Psoas muscle (tissue), 8 donors: ENCODE measurements at regions of chr1 and their contacts with region 1.

Region 1: GRCh38 chr1:44213222-44214112 is at the start of gene DMAP1:
- DNase-seq: peak; percentile 79 to 91
- ATAC-seq: peak; percentile 92 to 97 (median 94)
- H3K4me3 ChIP-seq: peak within 1 kb of the TSS; percentile 94
- H3K27ac ChIP-seq: peak within 1 kb of the TSS; percentile 78
- H3K4me1 ChIP-seq: peaks cover 10% of the 10 kb centered on the region
- H3K27me3 ChIP-seq: no peaks in the 10 kb centered on the region
- CTCF ChIP-seq: no peak
- total RNA-seq, gene DMAP1: 18.5 to 28.3 (median 23.7) TPM

Region 2: DNA sequence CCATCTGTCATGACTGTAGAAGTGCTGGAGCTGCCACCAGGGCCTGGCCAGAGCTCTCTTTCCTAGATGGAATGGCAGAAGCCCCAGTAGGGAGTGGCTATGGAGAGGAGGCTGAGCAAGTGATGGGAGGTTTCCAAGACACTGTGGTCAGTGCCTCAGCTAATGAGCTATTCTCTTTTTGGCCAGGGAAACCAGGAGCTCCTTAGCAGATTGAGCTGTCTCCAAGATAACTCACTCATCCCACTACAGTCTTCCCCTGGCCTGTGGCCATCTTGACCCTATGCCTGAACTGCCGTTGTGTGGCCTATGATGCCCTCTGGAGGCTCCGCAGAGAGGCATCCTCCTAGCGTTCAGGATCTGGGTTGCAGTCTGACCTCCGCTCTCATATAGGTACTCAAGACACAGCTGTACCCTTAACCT is 81.1 kb after region 1 on chr1:
- intact Hi-C with region 1: loop called in 1 of 2 experiments (anchors 5 kb)
- DNase-seq: peak; percentile 66 to 77
- ATAC-seq: peak; percentile 64 to 74 (median 66)
- H3K4me3 ChIP-seq: no peak overlapping the region
- H3K27ac ChIP-seq: no peak overlapping the region
- H3K4me1 ChIP-seq: peaks cover 34% of the 10 kb centered on the region
- H3K27me3 ChIP-seq: no peaks in the 10 kb centered on the region
- CTCF ChIP-seq: peak; percentile 20

Region 3: GRCh38 chr1:44318097-44319088 is 104.9 kb after region 1 on chr1:
- intact Hi-C with region 1: loop called in 1 of 2 experiments (anchors 5 kb)
- DNase-seq: no peak
- ATAC-seq: peak in 1 of 4 donors; percentile 45
- H3K4me3 ChIP-seq: no peak overlapping the region
- H3K27ac ChIP-seq: no peak overlapping the region
- H3K4me1 ChIP-seq: peaks cover 8% of the 10 kb centered on the region
- H3K27me3 ChIP-seq: no peaks in the 10 kb centered on the region
- CTCF ChIP-seq: peak; percentile 76

Region 4: DNA sequence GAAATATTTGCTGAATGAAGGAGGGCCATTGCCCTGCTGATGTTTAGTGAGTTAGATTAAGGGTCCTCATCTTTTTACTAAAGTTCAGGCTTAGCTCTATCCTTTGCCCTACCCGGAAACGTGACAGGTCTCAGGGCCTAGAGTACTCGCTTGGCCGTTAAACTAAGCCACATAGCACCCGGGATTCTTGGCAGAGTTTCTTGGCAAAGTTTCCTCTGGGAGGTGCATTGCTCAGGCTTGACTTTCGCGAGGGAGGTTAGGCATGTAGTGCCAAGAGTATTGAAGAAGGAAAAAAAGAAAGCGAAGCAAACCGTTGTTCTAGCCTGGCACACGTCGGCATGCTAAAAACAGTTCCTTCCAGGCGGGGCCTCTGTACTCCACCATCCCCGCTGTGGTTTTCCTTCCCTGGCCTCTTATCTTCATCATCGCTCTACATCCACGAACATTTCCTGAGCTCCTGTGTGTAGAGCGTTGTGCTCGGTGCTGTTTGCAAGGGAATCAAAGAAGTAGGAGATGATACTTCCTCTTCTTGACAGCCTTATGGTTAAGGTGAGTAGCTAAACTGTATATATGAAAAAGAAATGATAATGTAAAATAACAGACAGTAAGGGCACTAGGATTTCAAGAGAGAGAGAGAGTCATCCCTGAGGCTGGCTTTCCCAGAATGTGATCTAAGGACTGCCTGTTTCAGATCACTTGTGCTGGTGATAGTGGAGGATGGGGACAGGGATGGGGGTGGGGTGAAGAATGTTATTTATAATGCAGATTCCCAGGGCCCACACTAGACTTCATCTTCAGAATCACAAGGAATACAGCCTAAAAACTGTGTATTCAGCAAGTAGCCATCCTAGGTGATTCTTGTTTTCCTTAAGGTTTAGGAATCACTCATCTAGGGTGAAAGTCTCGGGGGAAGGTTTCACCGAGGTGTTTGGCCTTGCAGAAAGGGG is 210.4 kb after region 1 on chr1:
- intact Hi-C with region 1: loop called in 1 of 2 experiments (anchors 5 kb)
- DNase-seq: no peak
- ATAC-seq: peak; percentile 75 to 96 (median 92)
- H3K4me3 ChIP-seq: peak overlapping the region; percentile 8
- H3K27ac ChIP-seq: peak overlapping the region; percentile 36
- H3K4me1 ChIP-seq: peaks cover 25% of the 10 kb centered on the region
- H3K27me3 ChIP-seq: peaks cover 0 to 45% (median 2%) of the 10 kb centered on the region in 3 donors
- CTCF ChIP-seq: no peak

Region 5: DNA sequence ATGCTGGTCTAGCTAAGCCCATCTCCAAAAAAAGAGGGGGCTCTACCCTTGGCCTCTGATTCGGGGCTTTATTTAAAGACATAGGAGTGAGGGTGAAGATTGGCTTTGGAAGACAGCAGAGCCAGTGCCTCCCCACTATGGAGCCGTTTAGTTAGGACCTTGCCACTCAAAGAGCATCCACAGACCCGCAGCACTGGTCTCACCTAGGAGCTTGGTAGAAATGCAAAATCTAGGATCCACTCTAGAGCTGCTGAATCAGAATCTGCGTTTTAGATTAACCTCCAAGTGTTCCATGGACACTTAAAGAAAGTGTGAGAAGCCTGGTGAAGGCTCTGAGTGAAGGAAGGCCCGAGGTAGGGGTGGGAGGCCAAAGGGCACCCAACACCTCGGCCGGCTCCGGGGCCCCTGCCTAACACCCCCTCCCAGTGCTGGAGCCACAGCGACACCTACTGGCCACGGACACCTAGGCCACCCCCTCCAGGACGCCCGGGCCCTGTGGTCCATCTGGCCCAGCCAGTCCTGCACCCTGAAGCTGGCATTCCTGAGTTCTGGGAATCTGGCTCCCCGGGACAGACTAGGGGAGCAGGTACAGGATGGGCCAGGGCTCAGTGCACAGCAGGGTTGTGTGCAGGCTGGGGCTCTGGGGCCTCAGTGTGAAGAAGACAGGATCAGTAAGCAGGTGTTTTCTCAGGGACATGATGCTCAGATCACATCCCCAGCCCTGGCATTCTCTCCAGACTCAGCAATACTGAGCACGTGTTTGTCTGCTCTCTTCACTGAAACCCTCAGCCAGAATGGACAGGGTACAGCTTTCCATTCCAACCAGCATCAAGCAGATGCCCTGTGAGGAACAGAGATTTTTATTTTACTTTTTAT is 381.6 kb after region 1 on chr1:
- intact Hi-C with region 1: loop called (anchors 1 to 5 kb)
- DNase-seq: peak; percentile 79 to 90
- ATAC-seq: peak; percentile 88 to 98 (median 92)
- H3K4me3 ChIP-seq: no peak overlapping the region
- H3K27ac ChIP-seq: no peak overlapping the region
- H3K4me1 ChIP-seq: no peaks in the 10 kb centered on the region
- H3K27me3 ChIP-seq: peaks cover 0 to 7% (median 2%) of the 10 kb centered on the region in 3 donors
- CTCF ChIP-seq: peak; percentile 95

Region 6: DNA sequence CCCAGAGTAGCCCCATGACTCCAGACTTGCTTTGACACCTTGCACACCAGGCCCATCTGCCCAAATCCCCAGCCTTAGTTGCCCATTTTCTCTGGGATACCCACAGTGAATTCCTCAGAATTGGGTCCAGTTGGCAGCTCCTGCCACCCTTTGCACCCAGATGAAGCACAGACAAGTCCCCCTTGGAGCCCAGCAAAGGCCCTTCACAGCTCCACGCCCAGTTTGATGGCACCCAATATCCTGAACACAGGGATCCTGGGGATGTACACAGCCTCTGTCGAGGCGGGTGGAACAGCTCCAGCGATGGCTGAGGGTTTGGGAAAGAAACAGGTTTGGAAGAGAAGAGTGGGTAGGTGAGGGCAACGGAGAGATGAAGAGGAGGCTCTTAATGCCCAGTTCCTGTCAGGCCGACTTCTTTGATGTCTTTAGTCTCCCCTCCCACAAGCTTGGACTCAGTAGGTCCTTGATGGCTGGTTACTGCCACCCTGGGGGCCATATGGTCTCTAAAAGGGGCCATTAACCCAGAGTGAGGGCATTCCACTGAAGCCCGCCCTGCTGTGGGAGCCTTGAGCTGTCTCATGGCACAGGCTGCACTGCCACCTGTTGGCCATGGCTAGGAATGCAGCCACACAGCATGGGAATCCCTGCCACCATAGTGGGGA is 439.1 kb after region 1 on chr1:
- intact Hi-C with region 1: loop called in 1 of 2 experiments (anchors 10 kb)
- DNase-seq: peak; percentile 79 to 88
- ATAC-seq: peak; percentile 87 to 91 (median 89)
- H3K4me3 ChIP-seq: no peak overlapping the region
- H3K27ac ChIP-seq: no peak overlapping the region
- H3K4me1 ChIP-seq: peaks cover 3% of the 10 kb centered on the region
- H3K27me3 ChIP-seq: no peaks in the 10 kb centered on the region
- CTCF ChIP-seq: peak; percentile 94